SK-N-SH (cell line): ENCODE measurements at regions of chr7 and their contacts with region 1.

Region 1: DNA sequence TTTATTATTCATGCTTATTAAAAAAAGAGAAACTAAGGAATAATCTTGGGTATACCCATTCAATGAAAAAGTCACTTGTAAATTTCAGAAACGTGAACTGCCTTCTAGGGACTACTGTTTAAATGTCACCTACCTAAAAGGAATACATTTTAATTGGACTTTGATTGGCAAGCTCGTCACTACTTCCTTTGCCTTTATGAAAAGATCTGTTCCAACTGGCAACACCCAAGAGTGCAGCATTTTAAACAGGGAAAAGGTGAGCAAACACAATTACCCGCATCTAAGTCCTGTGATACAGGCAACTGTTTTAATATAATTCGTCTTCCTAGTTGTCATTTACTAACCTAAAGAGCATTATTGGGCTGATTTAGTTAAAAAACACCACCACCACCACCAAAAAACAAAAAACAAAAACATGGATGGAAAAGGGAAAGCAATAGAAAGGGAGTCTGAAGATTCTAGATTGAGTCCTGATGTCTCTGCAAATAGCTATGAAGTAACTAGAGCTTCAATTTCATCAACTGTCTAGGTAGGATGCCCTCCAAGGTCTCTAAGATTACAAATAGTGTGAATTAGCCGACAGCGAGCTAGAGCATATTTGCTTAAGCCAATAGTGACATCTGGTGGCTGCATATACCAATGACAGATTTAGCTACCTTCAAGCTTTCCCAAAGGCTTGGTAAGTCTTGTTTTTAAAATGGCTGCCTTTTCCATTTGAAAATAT is 33.8 kb upstream of the ICA1 start:
- DNase-seq: peak; percentile 71
- H3K4me3 ChIP-seq: peak overlapping the region in 1 of 2 experiments; percentile 17; a peak in 1 of 4 replicates
- H3K27ac ChIP-seq: peak overlapping the region in 1 of 2 experiments; percentile 100; a peak in 2 of 4 replicates
- H3K4me1 ChIP-seq: peaks cover 0 to 21% of the 10 kb centered on the region in 2 experiments; a peak in 2 of 4 replicates
- H3K27me3 ChIP-seq: no peaks in the 10 kb centered on the region
- CTCF ChIP-seq: peak; percentile 93
- EP300 ChIP-seq: peak in 1 of 2 experiments; percentile 60; a peak in 2 of 4 replicates
- RAD21 ChIP-seq: peak; percentile 100

Region 2: DNA sequence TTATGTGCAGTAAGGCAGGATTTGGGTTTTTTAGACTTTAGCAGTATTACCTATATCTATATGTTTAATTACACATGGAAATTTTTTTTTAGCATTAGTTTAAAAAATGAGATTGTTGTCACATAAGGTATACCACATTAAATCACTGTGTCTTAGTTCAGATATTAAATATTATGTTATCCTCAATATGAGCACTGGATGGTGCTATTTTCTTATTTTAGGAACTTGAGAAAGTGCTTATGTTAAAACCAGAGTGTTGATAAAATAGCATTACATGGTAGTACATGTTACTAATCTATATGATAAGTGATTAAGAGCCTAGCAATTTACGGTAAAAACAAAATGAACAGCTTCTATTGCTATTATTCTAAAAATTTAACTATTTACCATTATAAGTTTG is 700.3 kb before region 1 on chr7:
- CTCF ChIA-PET with region 1: interaction called, 26 read pairs
- POLR2A ChIA-PET with region 1: interaction called, 3 read pairs
- DNase-seq: peak; percentile 58
- H3K4me3 ChIP-seq: no peak overlapping the region
- H3K27ac ChIP-seq: peak overlapping the region in 1 of 2 experiments; percentile 40; a peak in 2 of 4 replicates
- H3K4me1 ChIP-seq: no peaks in the 10 kb centered on the region
- H3K27me3 ChIP-seq: no peaks in the 10 kb centered on the region
- CTCF ChIP-seq: peak; percentile 74
- EP300 ChIP-seq: no peak
- RAD21 ChIP-seq: peak; percentile 86

Region 3: GRCh38 chr7:7968543-7969305 is 327.1 kb before region 1 on chr7 and contains the start of gene GLCCI1:
- CTCF ChIA-PET with region 1: interaction called, 10 read pairs
- POLR2A ChIA-PET with region 1: interaction called, 8 read pairs
- DNase-seq: peak; percentile 96
- H3K4me3 ChIP-seq: peak within 1 kb of the TSS; percentile 87 to 100
- H3K27ac ChIP-seq: peak within 1 kb of the TSS; percentile 77 to 99
- H3K4me1 ChIP-seq: peaks cover 8 to 37% of the 10 kb centered on the region in 2 experiments; a peak in 3 of 4 replicates
- H3K27me3 ChIP-seq: no peaks in the 10 kb centered on the region
- CTCF ChIP-seq: no peak
- EP300 ChIP-seq: peak; percentile 34 to 39; a peak in 2 of 4 replicates
- RAD21 ChIP-seq: peak; percentile 13; the same call in 1 of the 2 replicates
- polyA plus RNA-seq, gene GLCCI1: 5.5 and 7.5 TPM in 2 replicates

Region 4: GRCh38 chr7:8226501-8226900 is 69.3 kb before region 1 on chr7:
- CTCF ChIA-PET with region 1: interaction called, 83 read pairs
- POLR2A ChIA-PET with region 1: interaction called, 74 read pairs
- DNase-seq: no peak
- H3K4me3 ChIP-seq: no peak overlapping the region
- H3K27ac ChIP-seq: peak overlapping the region in 1 of 2 experiments; percentile 100; a peak in 2 of 4 replicates
- H3K4me1 ChIP-seq: peaks cover 0 to 68% of the 10 kb centered on the region in 2 experiments; a peak in 2 of 4 replicates
- H3K27me3 ChIP-seq: no peaks in the 10 kb centered on the region
- CTCF ChIP-seq: no peak
- EP300 ChIP-seq: peak in 1 of 2 experiments; percentile 56; a peak in 2 of 4 replicates
- RAD21 ChIP-seq: no peak

Region 5: GRCh38 chr7:8261711-8262695 is 33.8 kb before region 1 on chr7 and contains the start of gene ICA1:
- CTCF ChIA-PET with region 1: interaction called, 26 read pairs
- POLR2A ChIA-PET with region 1: interaction called, 122 read pairs
- DNase-seq: peak; percentile 90
- H3K4me3 ChIP-seq: peak within 1 kb of the TSS; percentile 63 to 71
- H3K27ac ChIP-seq: peak within 1 kb of the TSS in 1 of 2 experiments; percentile 100; a peak in 3 of 4 replicates
- H3K4me1 ChIP-seq: peaks cover 0 to 21% of the 10 kb centered on the region in 2 experiments; a peak in 2 of 4 replicates
- H3K27me3 ChIP-seq: peaks cover 14% of the 10 kb centered on the region; the same call in 1 of the 2 replicates
- CTCF ChIP-seq: no peak
- EP300 ChIP-seq: no peak
- RAD21 ChIP-seq: no peak
- polyA plus RNA-seq, gene ICA1: 2.4 and 5.4 TPM in 2 replicates

Region 6: DNA sequence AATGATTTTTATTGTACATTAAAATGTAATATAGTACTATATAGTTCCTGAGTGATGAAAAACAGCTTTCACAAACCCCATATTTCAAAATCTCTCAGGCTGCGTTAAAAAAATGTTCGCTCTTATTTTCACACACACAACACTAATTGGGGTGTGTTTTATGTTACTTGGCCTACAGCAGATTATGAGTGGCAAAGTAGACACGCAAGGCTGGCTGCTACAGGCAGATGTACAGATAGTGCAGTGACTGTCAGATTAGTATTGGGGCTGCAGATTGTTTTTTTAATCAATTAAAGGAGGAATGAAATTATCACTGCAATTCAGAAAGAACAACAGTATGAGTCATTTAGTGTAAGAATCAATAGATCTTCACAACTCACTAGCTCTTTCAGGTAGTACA is 31.4 kb after region 1 on chr7:
- CTCF ChIA-PET with region 1: interaction called, 10 read pairs
- POLR2A ChIA-PET with region 1: interaction called, 10 read pairs
- DNase-seq: peak; percentile 57
- H3K4me3 ChIP-seq: no peak overlapping the region
- H3K27ac ChIP-seq: peak overlapping the region in 1 of 2 experiments; percentile 96; a peak in 2 of 4 replicates
- H3K4me1 ChIP-seq: peaks cover 0 to 29% of the 10 kb centered on the region in 2 experiments; a peak in 2 of 4 replicates
- H3K27me3 ChIP-seq: no peaks in the 10 kb centered on the region
- CTCF ChIP-seq: no peak
- EP300 ChIP-seq: peak in 1 of 2 experiments; percentile 96; a peak in 2 of 4 replicates
- RAD21 ChIP-seq: no peak

Region 7: GRCh38 chr7:8481752-8482446 is 186.1 kb after region 1 on chr7:
- CTCF ChIA-PET with region 1: no interaction called
- POLR2A ChIA-PET with region 1: no interaction called
- DNase-seq: no peak
- H3K4me3 ChIP-seq: no peak overlapping the region
- H3K27ac ChIP-seq: no peak overlapping the region
- H3K4me1 ChIP-seq: no peaks in the 10 kb centered on the region
- H3K27me3 ChIP-seq: no peaks in the 10 kb centered on the region
- CTCF ChIP-seq: no peak
- EP300 ChIP-seq: no peak
- RAD21 ChIP-seq: no peak